ENCODE measurements at regions of chr6 and their contacts with region 1.

Region 1: GRCh38 chr6:27518881-27519795 is 46.2 kb upstream of the ZNF184 start:
- DNase-seq: peak; percentile 83
- ATAC-seq: peak; percentile 92
- H3K4me3 ChIP-seq: peak overlapping the region; percentile 83
- H3K27ac ChIP-seq: peak overlapping the region; percentile 67
- H3K4me1 ChIP-seq: no peaks in the 10 kb centered on the region
- H3K27me3 ChIP-seq: 0 out of 4 replicates have a peak, but pooled peaks cover 0 to 5% of the 10 kb centered on the region in 2 experiments
- CTCF ChIP-seq: peak; percentile 61 to 72 (median 69)
- EP300 ChIP-seq: peak in 1 of 2 experiments; percentile 15; a peak in 1 of 4 replicates
- POLR2A ChIP-seq: no peak
- RAD21 ChIP-seq: peak; percentile 68

Region 2: GRCh38 chr6:27312146-27312949 is 206.8 kb before region 1 on chr6 and contains the start of gene POM121L2:
- CTCF ChIA-PET with region 1: interaction called, 8 read pairs
- POLR2A ChIA-PET with region 1: no interaction called
- RAD21 ChIA-PET with region 1: interaction called, 4 read pairs
- SMC1A ChIA-PET with region 1: interaction called, 3 read pairs
- in situ Hi-C with region 1: no loop called
- intact Hi-C with region 1: loop called (anchors 1 kb)
- DNase-seq: no peak
- ATAC-seq: peak; percentile 89
- H3K4me3 ChIP-seq: peak within 1 kb of the TSS; percentile 82
- H3K27ac ChIP-seq: no peak within 1 kb of the TSS
- H3K4me1 ChIP-seq: 0 out of 2 replicates have a peak, but pooled peaks cover 5% of the 10 kb centered on the region
- H3K27me3 ChIP-seq: no peaks in the 10 kb centered on the region; a peak in 2 of 4 replicates
- CTCF ChIP-seq: peak; percentile 74 to 85 (median 77)
- EP300 ChIP-seq: no peak
- POLR2A ChIP-seq: peak; percentile 45
- RAD21 ChIP-seq: peak; percentile 81
- polyA plus RNA-seq, gene POM121L2: not detected

Region 3: GRCh38 chr6:27452496-27452897 is 66.6 kb before region 1 on chr6:
- CTCF ChIA-PET with region 1: no interaction called
- POLR2A ChIA-PET with region 1: no interaction called
- RAD21 ChIA-PET with region 1: no interaction called
- SMC1A ChIA-PET with region 1: no interaction called
- in situ Hi-C with region 1: no loop called
- intact Hi-C with region 1: no loop called
- DNase-seq: no peak
- ATAC-seq: no peak
- H3K4me3 ChIP-seq: no peak overlapping the region
- H3K27ac ChIP-seq: no peak overlapping the region
- H3K4me1 ChIP-seq: no peaks in the 10 kb centered on the region
- H3K27me3 ChIP-seq: no peaks in the 10 kb centered on the region
- CTCF ChIP-seq: no peak
- EP300 ChIP-seq: no peak
- POLR2A ChIP-seq: no peak
- RAD21 ChIP-seq: no peak

Region 4: GRCh38 chr6:27545271-27546046 is 26.3 kb after region 1 on chr6:
- CTCF ChIA-PET with region 1: interaction called, 7 read pairs
- POLR2A ChIA-PET with region 1: no interaction called
- RAD21 ChIA-PET with region 1: no interaction called
- SMC1A ChIA-PET with region 1: no interaction called
- in situ Hi-C with region 1: no loop called
- intact Hi-C with region 1: loop called (anchors 1 kb)
- DNase-seq: peak; percentile 68
- ATAC-seq: peak; percentile 84
- H3K4me3 ChIP-seq: peak overlapping the region; percentile 75
- H3K27ac ChIP-seq: peak overlapping the region; percentile 5; the same call in 1 of the 2 replicates
- H3K4me1 ChIP-seq: no peaks in the 10 kb centered on the region
- H3K27me3 ChIP-seq: no peaks in the 10 kb centered on the region
- CTCF ChIP-seq: no peak
- EP300 ChIP-seq: no peak; a peak in 1 of 4 replicates
- POLR2A ChIP-seq: no peak
- RAD21 ChIP-seq: no peak

Region 5: GRCh38 chr6:27553123-27553904 is 34.2 kb after region 1 on chr6:
- CTCF ChIA-PET with region 1: interaction called, 13 read pairs
- POLR2A ChIA-PET with region 1: no interaction called
- RAD21 ChIA-PET with region 1: no interaction called
- SMC1A ChIA-PET with region 1: interaction called, 8 read pairs
- in situ Hi-C with region 1: no loop called
- intact Hi-C with region 1: no loop called
- DNase-seq: peak; percentile 82
- ATAC-seq: peak; percentile 90
- H3K4me3 ChIP-seq: peak overlapping the region; percentile 44
- H3K27ac ChIP-seq: 0 out of 2 replicates have a peak overlapping the region, but pooled peaks have one; percentile 26
- H3K4me1 ChIP-seq: no peaks in the 10 kb centered on the region
- H3K27me3 ChIP-seq: no peaks in the 10 kb centered on the region; a peak in 2 of 4 replicates
- CTCF ChIP-seq: no peak
- EP300 ChIP-seq: no peak
- POLR2A ChIP-seq: no peak
- RAD21 ChIP-seq: no peak

Region 6: DNA sequence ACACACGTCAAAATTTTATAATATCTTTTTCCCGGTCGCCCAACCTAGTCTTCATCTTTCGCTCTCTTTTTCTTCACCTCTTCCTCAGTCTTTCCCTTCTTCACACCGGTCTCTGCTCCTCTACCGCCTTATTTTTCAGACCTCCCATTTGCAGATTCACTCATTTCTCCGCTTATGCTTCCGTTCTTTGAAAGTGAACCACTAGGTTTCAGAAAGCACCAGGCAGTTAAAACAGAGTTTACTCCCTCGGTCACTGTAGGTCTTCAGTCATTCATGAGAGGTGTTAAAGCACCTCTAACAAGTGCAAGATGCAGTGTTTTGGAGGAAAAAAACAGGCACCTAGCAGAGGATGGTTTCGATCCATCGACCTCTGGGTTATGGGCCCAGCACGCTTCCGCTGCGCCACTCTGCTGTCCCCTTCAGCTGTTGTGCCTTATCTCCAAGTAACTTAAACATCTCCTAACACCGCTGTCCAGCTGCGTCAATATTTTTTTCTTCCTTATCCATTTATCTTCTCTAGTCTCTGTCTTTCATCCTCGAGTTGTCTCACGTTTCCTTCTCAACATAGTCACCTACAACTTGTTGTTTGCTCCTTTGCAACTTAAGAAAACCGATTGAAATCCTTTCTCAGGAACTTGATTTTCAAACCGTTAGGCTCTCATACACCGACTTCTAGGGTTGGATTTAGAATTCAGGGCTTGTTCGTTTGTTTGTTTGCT is 73.5 kb after region 1 on chr6:
- CTCF ChIA-PET with region 1: interaction called, 8 read pairs
- POLR2A ChIA-PET with region 1: no interaction called
- RAD21 ChIA-PET with region 1: no interaction called
- SMC1A ChIA-PET with region 1: interaction called, 4 read pairs
- in situ Hi-C with region 1: no loop called
- intact Hi-C with region 1: loop called (anchors 5 kb)
- DNase-seq: peak; percentile 89
- ATAC-seq: peak; percentile 94
- H3K4me3 ChIP-seq: peak overlapping the region; percentile 81
- H3K27ac ChIP-seq: peak overlapping the region; percentile 9; the same call in 1 of the 2 replicates
- H3K4me1 ChIP-seq: peaks cover 11% of the 10 kb centered on the region
- H3K27me3 ChIP-seq: no peaks in the 10 kb centered on the region
- CTCF ChIP-seq: no peak
- EP300 ChIP-seq: peak in 1 of 2 experiments; percentile 84; a peak in 1 of 4 replicates
- POLR2A ChIP-seq: no peak
- RAD21 ChIP-seq: no peak

Region 7: DNA sequence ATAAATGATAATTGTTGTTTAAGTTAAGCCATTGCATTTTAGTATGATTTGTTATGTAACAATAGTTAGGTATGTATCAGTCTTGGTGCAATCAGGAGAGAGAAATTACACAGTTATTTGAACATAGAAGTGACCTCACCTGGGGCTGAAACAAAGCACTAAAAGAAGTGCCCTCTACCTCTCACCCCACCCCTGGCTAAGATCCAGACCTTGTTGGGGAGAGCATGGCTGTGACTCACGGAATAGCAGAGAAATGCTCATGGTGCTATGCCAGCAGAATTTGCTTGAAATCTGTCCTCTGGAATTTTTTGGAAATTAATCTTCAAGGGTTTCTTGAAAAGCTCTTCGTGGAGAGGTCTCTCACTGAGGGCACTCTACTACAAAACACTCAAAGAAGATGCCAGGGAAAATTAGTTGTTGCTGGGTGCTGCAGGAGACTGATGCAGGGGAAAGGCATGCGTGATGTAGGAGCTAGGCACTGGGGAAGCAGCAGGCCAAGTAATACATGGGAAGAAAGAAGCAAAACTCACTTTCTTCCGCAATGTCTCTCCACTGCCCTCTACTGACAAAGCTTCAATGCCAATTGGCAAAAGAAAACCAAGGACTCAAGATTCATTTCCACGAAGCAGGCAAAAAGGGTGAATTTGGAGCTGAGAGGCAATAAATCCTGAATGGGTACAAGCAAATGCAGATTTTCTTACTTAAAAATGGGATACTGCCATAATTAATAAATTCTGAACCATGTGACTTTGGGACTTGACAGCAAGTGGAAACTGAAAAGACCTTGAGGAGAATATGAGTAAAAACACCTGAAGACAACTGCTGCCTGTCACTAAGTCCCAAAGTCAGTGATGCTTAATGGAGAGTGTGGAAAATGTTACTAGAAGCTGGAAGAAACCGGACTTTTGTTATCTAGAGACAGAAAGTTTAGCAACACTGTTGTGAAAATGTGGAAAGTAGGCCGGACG is 90.1 kb after region 1 on chr6:
- CTCF ChIA-PET with region 1: interaction called, 49 read pairs
- POLR2A ChIA-PET with region 1: no interaction called
- RAD21 ChIA-PET with region 1: interaction called, 10 read pairs
- SMC1A ChIA-PET with region 1: interaction called, 17 read pairs
- in situ Hi-C with region 1: no loop called
- intact Hi-C with region 1: loop called (anchors 1 kb)
- DNase-seq: peak; percentile 56
- ATAC-seq: peak; percentile 65
- H3K4me3 ChIP-seq: no peak overlapping the region
- H3K27ac ChIP-seq: no peak overlapping the region
- H3K4me1 ChIP-seq: no peaks in the 10 kb centered on the region
- H3K27me3 ChIP-seq: no peaks in the 10 kb centered on the region
- CTCF ChIP-seq: peak; percentile 82 to 90 (median 90)
- EP300 ChIP-seq: no peak
- POLR2A ChIP-seq: no peak
- RAD21 ChIP-seq: peak; percentile 82

Region 8: DNA sequence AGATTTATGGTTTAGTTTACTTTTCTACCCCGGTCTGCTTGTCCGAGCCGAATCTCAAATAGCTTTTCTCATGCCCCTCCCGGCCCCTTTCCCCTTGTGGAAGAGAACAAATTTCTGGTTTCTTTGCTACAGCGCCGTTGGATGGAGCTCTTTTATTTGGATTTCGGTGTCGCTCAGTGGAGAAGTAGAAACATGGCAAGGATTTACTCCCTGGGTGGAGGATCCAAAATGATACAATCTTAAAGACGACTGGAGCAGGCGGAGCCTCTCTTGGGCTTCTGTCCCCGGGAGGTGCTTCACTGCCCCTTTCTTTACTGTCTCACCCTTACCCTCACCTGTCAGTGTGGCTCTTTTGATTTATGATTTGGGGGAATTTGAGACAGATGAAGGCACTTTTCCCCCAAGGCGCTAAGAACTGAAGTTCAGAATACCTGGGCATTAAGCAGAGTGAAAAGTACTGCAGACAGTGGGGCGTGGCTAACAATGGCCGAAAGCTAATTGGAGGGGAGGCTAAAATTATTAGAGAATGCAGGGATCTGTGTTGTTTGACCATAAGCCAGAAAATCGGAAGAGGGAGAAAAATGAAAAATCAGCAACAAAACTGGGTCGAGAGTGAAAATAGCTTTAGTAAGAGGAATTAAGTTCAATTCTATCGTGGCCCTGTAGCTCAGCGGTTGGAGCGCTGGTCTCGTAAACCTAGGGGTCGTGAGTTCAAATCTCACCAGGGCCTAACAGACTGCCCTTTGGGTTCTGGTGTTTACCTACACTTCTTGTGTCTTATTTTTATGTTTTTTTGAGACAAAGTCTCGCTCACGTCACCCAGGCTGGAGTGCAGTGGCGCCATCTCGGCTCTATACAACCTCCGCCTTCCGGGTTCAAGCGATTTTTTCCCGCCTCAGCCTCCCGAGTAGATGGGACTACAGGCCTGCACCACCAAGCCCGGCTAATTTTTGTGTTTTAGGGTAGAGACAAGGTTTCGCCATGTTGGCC is 98.9 kb after region 1 on chr6:
- CTCF ChIA-PET with region 1: interaction called, 14 read pairs
- POLR2A ChIA-PET with region 1: no interaction called
- RAD21 ChIA-PET with region 1: no interaction called
- SMC1A ChIA-PET with region 1: no interaction called
- in situ Hi-C with region 1: no loop called
- intact Hi-C with region 1: no loop called
- DNase-seq: no peak
- ATAC-seq: peak; percentile 84
- H3K4me3 ChIP-seq: peak overlapping the region; percentile 70
- H3K27ac ChIP-seq: no peak overlapping the region
- H3K4me1 ChIP-seq: no peaks in the 10 kb centered on the region
- H3K27me3 ChIP-seq: no peaks in the 10 kb centered on the region
- CTCF ChIP-seq: no peak
- EP300 ChIP-seq: no peak
- POLR2A ChIP-seq: no peak
- RAD21 ChIP-seq: no peak

Measured in GM12878 (cell line).